ENCODE measurements at regions of chr22 and their contacts with region 1.

Region 1: GRCh38 chr22:20079745-20080444 is at the start of gene DGCR8:
- DNase-seq: peak; percentile 78
- H3K4me3 ChIP-seq: peak within 1 kb of the TSS; percentile 85
- H3K27ac ChIP-seq: peak within 1 kb of the TSS; percentile 86
- H3K27me3 ChIP-seq: no peaks in the 10 kb centered on the region
- CTCF ChIP-seq: no peak
- polyA plus RNA-seq, gene DGCR8: 22.0 and 22.8 TPM in 2 replicates

Region 2: DNA sequence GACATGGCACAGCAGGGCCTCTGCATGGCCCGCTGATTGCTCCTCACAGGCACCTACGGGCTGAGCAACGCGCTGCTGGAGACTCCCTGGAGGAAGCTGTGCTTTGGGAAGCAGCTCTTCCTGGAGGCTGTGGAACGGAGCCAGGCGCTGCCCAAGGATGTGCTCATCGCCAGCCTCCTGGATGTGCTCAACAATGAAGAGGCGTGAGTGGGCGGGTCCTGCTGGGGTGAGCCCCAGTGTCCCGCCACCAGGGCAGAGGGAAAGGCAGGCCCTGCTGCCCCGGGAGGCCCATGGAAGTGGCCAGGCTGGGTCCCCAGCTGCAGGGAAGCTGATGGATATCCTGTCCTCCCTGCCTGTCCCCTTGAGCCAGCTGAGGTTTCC is 18.4 kb before region 1 on chr22:
- CTCF ChIA-PET with region 1: no interaction called
- POLR2A ChIA-PET with region 1: interaction called, 10 read pairs
- DNase-seq: no peak
- H3K4me3 ChIP-seq: no peak overlapping the region
- H3K27ac ChIP-seq: no peak overlapping the region
- H3K27me3 ChIP-seq: no peaks in the 10 kb centered on the region
- CTCF ChIP-seq: no peak

Measured in AG04450 (cell line).